Left cardiac atrium (tissue), 4 donors: ENCODE measurements at regions of chr2 and their contacts with region 1.

Region 1: GRCh38 chr2:58762176-58762781 is 521.2 kb upstream of the FANCL start:
- DNase-seq: no peak
- ATAC-seq: peak; percentile 17 to 38

Region 2: DNA sequence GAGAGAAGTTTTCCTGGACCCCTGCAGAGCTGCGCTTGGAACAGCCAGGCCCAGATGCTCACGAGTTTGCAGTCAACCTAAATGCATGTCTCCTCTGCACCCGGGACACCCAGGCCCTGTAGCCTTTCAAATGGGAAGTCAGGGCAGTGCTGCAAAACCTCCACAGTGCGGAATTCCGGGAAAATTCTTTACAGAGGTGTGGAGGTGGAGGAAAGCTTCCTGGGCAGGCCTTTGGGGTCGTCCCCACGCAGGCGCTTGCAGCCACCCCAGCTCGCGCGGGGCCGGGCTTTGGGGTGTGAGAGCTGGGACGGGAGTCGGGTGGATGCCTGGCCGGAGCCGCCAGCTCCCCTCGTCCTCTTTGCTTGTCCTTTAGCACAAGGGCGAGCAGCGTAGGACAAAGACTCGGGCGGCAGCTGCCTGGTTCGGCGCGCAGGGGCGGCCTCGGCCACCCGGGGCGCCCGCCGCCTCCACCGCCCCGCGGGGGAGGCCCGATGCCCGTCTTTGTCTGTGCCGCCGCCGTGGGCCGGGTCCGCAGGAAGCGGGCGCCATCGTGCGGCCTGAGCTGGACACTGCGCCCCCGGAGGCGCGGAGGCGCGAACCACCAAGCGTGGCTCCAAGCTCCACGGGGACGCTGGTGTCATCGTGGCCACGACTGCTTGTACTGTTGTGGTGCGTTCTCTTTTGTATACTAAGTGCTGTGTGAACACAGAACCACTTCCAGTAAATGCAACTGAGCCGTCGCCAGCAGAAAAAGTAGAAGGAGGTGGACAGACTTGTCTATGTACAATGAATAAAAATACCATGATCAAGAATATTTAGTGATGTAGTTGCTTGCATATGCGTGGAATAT is 1819.4 kb after region 1 on chr2:
- intact Hi-C with region 1: loop called in 1 of 2 experiments (anchors 10 kb)
- DNase-seq: peak; percentile 64
- ATAC-seq: peak; percentile 93 to 95